ENCODE measurements at regions of chr1 and their contacts with region 1.

Region 1: GRCh38 chr1:36257375-36257767 is 33.1 kb downstream of the THRAP3 start:
- DNase-seq: no peak
- ATAC-seq: peak; percentile 50
- H3K4me3 ChIP-seq: peak overlapping the region in 1 of 5 experiments; percentile 11
- H3K4me3 Mint-ChIP-seq: peak overlapping the region; percentile 51
- H3K27ac ChIP-seq: peak overlapping the region; percentile 34 to 66
- H3K27ac Mint-ChIP-seq: peak overlapping the region; percentile 76
- H3K4me1 ChIP-seq: peaks cover 35 to 45% of the 10 kb centered on the region in 2 donors
- H3K4me1 Mint-ChIP-seq: peaks cover 65% of the 10 kb centered on the region
- H3K27me3 ChIP-seq: no peaks in the 10 kb centered on the region
- H3K27me3 Mint-ChIP-seq: no peaks in the 10 kb centered on the region
- CTCF ChIP-seq: no peak

Region 2: GRCh38 chr1:36239941-36240637 is 17.3 kb before region 1 on chr1:
- CTCF ChIA-PET with region 1: no interaction called
- POLR2A ChIA-PET with region 1: no interaction called
- intact Hi-C with region 1: loop called (anchors 2 kb)
- DNase-seq: no peak
- ATAC-seq: no peak
- H3K4me3 ChIP-seq: no peak overlapping the region
- H3K4me3 Mint-ChIP-seq: no peak overlapping the region
- H3K27ac ChIP-seq: peak overlapping the region in 1 of 2 donors; percentile 9
- H3K27ac Mint-ChIP-seq: no peak overlapping the region
- H3K4me1 ChIP-seq: peaks cover 19 to 21% of the 10 kb centered on the region in 2 donors
- H3K4me1 Mint-ChIP-seq: peaks cover 43% of the 10 kb centered on the region
- H3K27me3 ChIP-seq: no peaks in the 10 kb centered on the region
- H3K27me3 Mint-ChIP-seq: no peaks in the 10 kb centered on the region
- CTCF ChIP-seq: no peak

Region 3: GRCh38 chr1:36273024-36273423 is 15.7 kb after region 1 on chr1:
- CTCF ChIA-PET with region 1: no interaction called
- POLR2A ChIA-PET with region 1: no interaction called
- intact Hi-C with region 1: no loop called
- DNase-seq: no peak
- ATAC-seq: no peak
- H3K4me3 ChIP-seq: no peak overlapping the region
- H3K4me3 Mint-ChIP-seq: no peak overlapping the region
- H3K27ac ChIP-seq: no peak overlapping the region
- H3K27ac Mint-ChIP-seq: no peak overlapping the region
- H3K4me1 ChIP-seq: no peaks in the 10 kb centered on the region
- H3K4me1 Mint-ChIP-seq: peaks cover 5% of the 10 kb centered on the region
- H3K27me3 ChIP-seq: no peaks in the 10 kb centered on the region
- H3K27me3 Mint-ChIP-seq: no peaks in the 10 kb centered on the region
- CTCF ChIP-seq: no peak